GM12878 (cell line): ENCODE measurements at regions of chr1 and their contacts with region 1.

Region 1: GRCh38 chr1:203038891-203039608 is 12.8 kb downstream of the PPFIA4 start:
- DNase-seq: no peak
- ATAC-seq: peak; percentile 91
- H3K4me3 ChIP-seq: no peak overlapping the region
- H3K27ac ChIP-seq: no peak overlapping the region
- H3K4me1 ChIP-seq: peaks cover 11% of the 10 kb centered on the region
- H3K27me3 ChIP-seq: no peaks in the 10 kb centered on the region
- CTCF ChIP-seq: peak; percentile 88 to 91 (median 89)
- EP300 ChIP-seq: no peak
- POLR2A ChIP-seq: no peak
- RAD21 ChIP-seq: peak; percentile 79

Region 2: GRCh38 chr1:203006948-203007871 is 31.8 kb before region 1 on chr1 and contains the start of gene TMEM183A:
- CTCF ChIA-PET with region 1: interaction called, 5 read pairs
- POLR2A ChIA-PET with region 1: interaction called, 3 read pairs
- RAD21 ChIA-PET with region 1: interaction called, 10 read pairs
- SMC1A ChIA-PET with region 1: interaction called, 5 read pairs
- in situ Hi-C with region 1: no loop called
- intact Hi-C with region 1: no loop called
- DNase-seq: peak; percentile 92
- ATAC-seq: peak; percentile 91
- H3K4me3 ChIP-seq: peak within 1 kb of the TSS; percentile 99
- H3K27ac ChIP-seq: peak within 1 kb of the TSS; percentile 96
- H3K4me1 ChIP-seq: peaks cover 5% of the 10 kb centered on the region
- H3K27me3 ChIP-seq: no peaks in the 10 kb centered on the region
- CTCF ChIP-seq: no peak
- EP300 ChIP-seq: no peak
- POLR2A ChIP-seq: peak; percentile 95
- RAD21 ChIP-seq: no peak
- polyA plus RNA-seq, gene TMEM183A: 12.3 to 25.0 TPM

Region 3: GRCh38 chr1:203026031-203026989 is 12.7 kb before region 1 on chr1 and contains the start of gene PPFIA4:
- CTCF ChIA-PET with region 1: interaction called, 52 read pairs
- POLR2A ChIA-PET with region 1: interaction called, 8 read pairs
- RAD21 ChIA-PET with region 1: interaction called, 8 read pairs
- SMC1A ChIA-PET with region 1: interaction called, 7 read pairs
- in situ Hi-C with region 1: no loop called
- intact Hi-C with region 1: no loop called
- DNase-seq: peak; percentile 42
- ATAC-seq: peak; percentile 96
- H3K4me3 ChIP-seq: peak within 1 kb of the TSS; percentile 93
- H3K27ac ChIP-seq: no peak within 1 kb of the TSS
- H3K4me1 ChIP-seq: no peaks in the 10 kb centered on the region; the same call in none of the 2 replicates
- H3K27me3 ChIP-seq: no peaks in the 10 kb centered on the region; a peak in 2 of 4 replicates
- CTCF ChIP-seq: peak in 1 of 3 experiments; percentile 24; a peak in 1 of 6 replicates
- EP300 ChIP-seq: no peak
- POLR2A ChIP-seq: peak; percentile 64
- RAD21 ChIP-seq: no peak
- polyA plus RNA-seq, gene PPFIA4: 0.02 to 0.11 TPM

Region 4: GRCh38 chr1:203057911-203058675 is 19.0 kb after region 1 on chr1:
- CTCF ChIA-PET with region 1: interaction called, 66 read pairs
- POLR2A ChIA-PET with region 1: no interaction called
- RAD21 ChIA-PET with region 1: interaction called, 6 read pairs
- SMC1A ChIA-PET with region 1: interaction called, 3 read pairs
- in situ Hi-C with region 1: no loop called
- intact Hi-C with region 1: no loop called
- DNase-seq: no peak
- ATAC-seq: no peak
- H3K4me3 ChIP-seq: no peak overlapping the region
- H3K27ac ChIP-seq: no peak overlapping the region
- H3K4me1 ChIP-seq: no peaks in the 10 kb centered on the region
- H3K27me3 ChIP-seq: no peaks in the 10 kb centered on the region; a peak in 1 of 4 replicates
- CTCF ChIP-seq: no peak
- EP300 ChIP-seq: no peak
- POLR2A ChIP-seq: no peak
- RAD21 ChIP-seq: no peak

Region 5: DNA sequence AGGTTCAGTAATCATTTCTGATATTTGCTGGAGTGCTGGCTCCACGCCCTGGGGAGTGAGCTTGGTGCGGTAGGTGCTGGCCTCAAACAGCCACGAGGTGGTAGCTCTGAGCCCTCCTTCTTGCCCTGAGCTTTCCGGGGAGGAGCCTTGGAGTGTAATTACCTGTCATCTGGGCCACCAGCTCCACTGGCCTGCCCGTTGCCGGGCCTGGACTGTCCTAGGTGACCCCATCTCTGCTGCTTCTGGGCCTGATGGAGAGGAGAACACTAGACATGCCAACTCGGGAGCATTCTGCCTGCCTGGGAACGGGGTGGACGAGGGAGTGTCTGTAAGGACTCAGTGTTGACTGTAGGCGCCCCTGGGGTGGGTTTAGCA is 127.5 kb after region 1 on chr1:
- CTCF ChIA-PET with region 1: interaction called, 65 read pairs
- POLR2A ChIA-PET with region 1: no interaction called
- RAD21 ChIA-PET with region 1: interaction called, 17 read pairs
- SMC1A ChIA-PET with region 1: interaction called, 24 read pairs
- in situ Hi-C with region 1: no loop called
- intact Hi-C with region 1: no loop called
- DNase-seq: no peak
- ATAC-seq: peak; percentile 95
- H3K4me3 ChIP-seq: no peak overlapping the region
- H3K27ac ChIP-seq: no peak overlapping the region
- H3K4me1 ChIP-seq: no peaks in the 10 kb centered on the region
- H3K27me3 ChIP-seq: peaks cover 0 to 3% of the 10 kb centered on the region in 2 experiments; a peak in 3 of 4 replicates
- CTCF ChIP-seq: peak; percentile 24 to 60 (median 48); a peak in 3 of 6 replicates
- EP300 ChIP-seq: no peak
- POLR2A ChIP-seq: no peak
- RAD21 ChIP-seq: peak; percentile 30; the same call in 1 of the 2 replicates